CD4-positive, alpha-beta memory T cell (primary cell): ENCODE measurements at regions of chr15 and their contacts with region 1.

Region 1: DNA sequence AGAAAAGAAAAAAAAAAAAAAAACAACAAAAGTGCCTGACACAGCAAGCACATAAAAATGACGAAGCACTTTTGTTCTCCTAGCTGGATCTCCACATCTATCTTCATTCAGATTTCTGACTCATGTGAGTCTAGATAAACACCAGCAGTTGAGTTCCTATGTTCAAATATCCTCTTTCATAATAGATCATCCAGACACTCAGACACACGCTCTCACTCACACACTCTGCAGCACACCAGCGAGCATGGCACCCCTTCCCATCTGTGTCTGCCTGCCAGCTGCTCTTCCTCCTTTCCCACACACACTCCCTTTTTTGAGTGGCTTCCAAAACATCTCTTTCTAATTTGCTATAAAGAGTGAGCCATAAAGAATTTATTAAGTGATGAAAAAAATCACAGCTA is 19.8 kb upstream of the CELF6 start:
- DNase-seq: no peak
- H3K4me3 ChIP-seq: no peak overlapping the region
- H3K4me3 Mint-ChIP-seq: no peak overlapping the region
- H3K27ac ChIP-seq: no peak overlapping the region
- H3K27ac Mint-ChIP-seq: peak overlapping the region in 1 of 7 donors; percentile 50
- H3K4me1 ChIP-seq: no peaks in the 10 kb centered on the region
- H3K4me1 Mint-ChIP-seq: no peaks in the 10 kb centered on the region
- H3K27me3 ChIP-seq: no peaks in the 10 kb centered on the region
- H3K27me3 Mint-ChIP-seq: no peaks in the 10 kb centered on the region

Region 2: GRCh38 chr15:72671535-72671934 is 331.8 kb after region 1 on chr15:
- CTCF ChIA-PET with region 1: interaction called, 3 read pairs
- POLR2A ChIA-PET with region 1: no interaction called
- intact Hi-C with region 1: loop called (anchors 10 kb)
- DNase-seq: no peak
- H3K4me3 ChIP-seq: no peak overlapping the region
- H3K4me3 Mint-ChIP-seq: no peak overlapping the region
- H3K27ac ChIP-seq: no peak overlapping the region
- H3K27ac Mint-ChIP-seq: no peak overlapping the region
- H3K4me1 ChIP-seq: peaks cover 4% of the 10 kb centered on the region
- H3K4me1 Mint-ChIP-seq: peaks cover 0 to 4% (median under 1%) of the 10 kb centered on the region in 4 donors
- H3K27me3 ChIP-seq: no peaks in the 10 kb centered on the region
- H3K27me3 Mint-ChIP-seq: peaks cover 7 to 13% of the 10 kb centered on the region in 2 donors

Region 3: DNA sequence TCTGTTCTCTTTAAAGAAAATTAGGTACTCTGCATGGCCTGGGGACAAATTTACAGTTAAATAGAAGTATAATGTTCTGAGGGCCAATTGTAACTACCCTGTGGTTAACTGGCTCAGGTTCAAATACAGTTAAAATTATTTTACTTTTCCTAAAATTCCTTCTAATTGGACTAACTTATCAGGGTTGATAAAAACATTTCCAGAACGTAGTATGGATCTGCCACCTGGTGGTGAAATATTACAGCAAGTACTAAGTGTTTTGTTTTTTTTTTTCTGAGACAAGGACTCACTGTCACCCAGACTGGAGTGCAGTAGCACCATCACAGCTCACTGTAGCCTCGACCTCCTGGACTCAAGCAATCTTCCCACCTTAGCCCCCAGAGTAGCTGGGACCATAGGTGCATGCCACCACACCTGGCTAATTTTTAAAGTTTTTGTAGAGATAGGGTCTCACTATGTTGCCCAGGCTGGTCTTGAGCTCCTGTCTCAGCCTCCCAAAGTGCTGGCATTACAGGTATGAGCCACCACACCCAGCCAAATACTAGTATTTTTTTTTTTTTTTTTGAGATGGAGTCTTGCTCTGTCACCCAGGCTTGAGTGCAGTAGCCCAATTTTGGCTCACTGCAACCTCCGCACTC is 741.7 kb after region 1 on chr15:
- CTCF ChIA-PET with region 1: no interaction called
- POLR2A ChIA-PET with region 1: no interaction called
- intact Hi-C with region 1: loop called (anchors 5 kb)
- DNase-seq: peak in 4 of 5 donors; percentile 40 to 51 (median 44)
- H3K4me3 ChIP-seq: no peak overlapping the region
- H3K4me3 Mint-ChIP-seq: no peak overlapping the region
- H3K27ac ChIP-seq: no peak overlapping the region
- H3K27ac Mint-ChIP-seq: no peak overlapping the region
- H3K4me1 ChIP-seq: no peaks in the 10 kb centered on the region
- H3K4me1 Mint-ChIP-seq: peaks cover 0 to 4% (median under 1%) of the 10 kb centered on the region in 4 donors
- H3K27me3 ChIP-seq: no peaks in the 10 kb centered on the region
- H3K27me3 Mint-ChIP-seq: no peaks in the 10 kb centered on the region

Region 4: DNA sequence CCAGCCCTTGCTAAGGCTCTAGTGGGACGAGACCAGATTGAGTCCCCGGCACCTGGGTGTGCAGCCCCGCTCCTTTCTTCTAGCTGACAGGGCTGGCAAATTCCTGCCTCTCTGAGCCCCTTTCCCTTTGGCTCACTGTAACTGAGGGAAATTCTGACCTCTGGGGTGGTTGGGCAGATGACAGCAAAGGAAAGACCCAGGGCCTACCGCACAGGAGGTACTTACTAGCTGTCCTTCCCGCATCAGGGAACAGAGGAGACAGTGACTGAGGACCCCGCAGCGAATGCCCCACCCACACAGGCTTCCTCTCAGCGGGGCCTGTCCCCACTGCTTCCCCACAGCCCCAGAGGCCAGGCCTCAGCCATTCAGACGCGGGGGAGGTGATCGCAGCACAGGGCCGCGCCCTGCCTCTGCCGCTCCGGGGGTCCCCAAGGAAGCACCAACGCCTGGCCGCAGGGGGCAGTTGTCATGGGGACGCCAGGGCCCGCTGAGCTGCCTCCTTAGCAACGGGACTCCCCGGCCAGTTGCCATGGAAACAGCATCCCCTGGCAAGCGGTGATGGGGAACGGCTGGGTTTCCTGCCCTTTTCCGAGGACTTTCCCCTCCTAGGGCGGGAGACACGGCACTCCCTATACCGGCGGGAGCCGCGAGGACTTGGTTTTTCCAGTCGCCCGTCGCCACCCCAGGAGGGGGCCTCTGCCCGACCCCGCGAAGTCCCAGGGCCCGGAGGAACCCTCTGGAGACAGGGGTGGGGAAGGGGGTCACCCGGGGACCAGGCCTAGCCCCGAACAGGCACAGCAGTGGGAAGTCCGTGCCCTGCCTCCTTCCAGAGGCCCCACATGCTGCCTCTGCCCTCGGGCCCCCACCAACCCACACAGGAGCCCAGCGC is 978.9 kb after region 1 on chr15:
- CTCF ChIA-PET with region 1: no interaction called
- POLR2A ChIA-PET with region 1: no interaction called
- intact Hi-C with region 1: no loop called
- DNase-seq: no peak
- H3K4me3 ChIP-seq: no peak overlapping the region
- H3K4me3 Mint-ChIP-seq: no peak overlapping the region
- H3K27ac ChIP-seq: no peak overlapping the region
- H3K27ac Mint-ChIP-seq: no peak overlapping the region
- H3K4me1 ChIP-seq: no peaks in the 10 kb centered on the region
- H3K4me1 Mint-ChIP-seq: peaks cover 0 to 4% (median 0%) of the 10 kb centered on the region in 4 donors
- H3K27me3 ChIP-seq: no peaks in the 10 kb centered on the region
- H3K27me3 Mint-ChIP-seq: peaks cover 7 to 19% of the 10 kb centered on the region in 2 donors